ENCODE measurements at regions of chr14 and their contacts with region 1.

Region 1: GRCh38 chr14:105480952-105481801 is 5.5 kb upstream of the CRIP1 start:
- DNase-seq: peak; percentile 81
- ATAC-seq: peak; percentile 78
- H3K4me3 ChIP-seq: peak overlapping the region; percentile 39
- H3K27ac ChIP-seq: peak overlapping the region; percentile 68
- H3K4me1 ChIP-seq: peaks cover 23% of the 10 kb centered on the region
- H3K27me3 ChIP-seq: peaks cover 9% of the 10 kb centered on the region; the same call in 1 of the 2 replicates
- CTCF ChIP-seq: peak; percentile 99
- POLR2A ChIP-seq: peak; percentile 78
- RAD21 ChIP-seq: peak; percentile 73

Region 2: DNA sequence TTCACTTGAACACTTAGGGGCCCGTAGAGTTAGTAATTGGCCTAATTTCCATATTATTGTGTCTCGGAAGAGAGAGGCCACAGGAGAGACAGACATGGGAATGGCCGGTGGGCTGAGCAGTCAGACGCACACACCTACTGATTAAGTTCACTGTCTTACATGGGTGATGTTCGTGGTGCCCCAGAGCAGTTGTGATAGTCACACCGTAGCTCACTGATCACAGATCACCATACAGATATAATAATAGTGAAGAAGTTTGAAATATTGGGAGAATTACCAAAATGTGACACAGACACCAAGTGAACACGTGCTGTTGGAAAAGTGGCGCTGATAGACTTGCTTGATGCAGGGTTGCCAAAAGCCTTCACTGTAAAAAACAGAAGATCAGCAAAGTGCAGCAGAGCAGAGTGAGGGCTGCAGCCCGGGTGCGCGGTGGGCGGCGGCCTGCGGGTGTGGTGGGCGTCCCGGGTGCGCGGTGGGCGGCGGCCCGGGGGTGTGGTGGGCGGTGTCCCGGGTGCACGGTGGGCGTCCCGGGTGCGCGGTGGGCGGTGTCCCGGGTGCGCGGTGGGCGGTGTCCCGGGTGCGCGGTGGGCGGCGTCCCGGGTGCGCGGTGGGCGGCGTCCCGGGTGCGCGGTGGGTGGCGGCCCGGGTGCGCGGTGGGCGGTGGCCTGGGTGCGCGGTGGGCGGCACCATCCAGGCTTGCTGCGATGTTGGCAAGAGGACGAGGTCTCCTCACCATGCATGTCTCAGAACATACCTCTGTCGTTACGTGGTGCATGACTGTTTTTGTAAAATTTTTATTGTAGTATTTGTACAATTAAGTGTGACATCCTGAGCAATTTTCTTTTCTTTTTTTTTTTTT is 117.1 kb before region 1 on chr14:
- CTCF ChIA-PET with region 1: interaction called, 13 read pairs
- POLR2A ChIA-PET with region 1: no interaction called
- dilution Hi-C with region 1: no loop called
- in situ Hi-C with region 1: no loop called
- intact Hi-C with region 1: no loop called
- DNase-seq: peak; percentile 72
- ATAC-seq: peak; percentile 94
- H3K4me3 ChIP-seq: peak overlapping the region; percentile 24
- H3K27ac ChIP-seq: no peak overlapping the region
- H3K4me1 ChIP-seq: peaks cover 2% of the 10 kb centered on the region; the same call in 1 of the 2 replicates
- H3K27me3 ChIP-seq: no peaks in the 10 kb centered on the region
- CTCF ChIP-seq: no peak
- POLR2A ChIP-seq: no peak
- RAD21 ChIP-seq: no peak

Measured in IMR-90 (cell line).